ENCODE measurements at regions of chr1 and their contacts with region 1.

Region 1: DNA sequence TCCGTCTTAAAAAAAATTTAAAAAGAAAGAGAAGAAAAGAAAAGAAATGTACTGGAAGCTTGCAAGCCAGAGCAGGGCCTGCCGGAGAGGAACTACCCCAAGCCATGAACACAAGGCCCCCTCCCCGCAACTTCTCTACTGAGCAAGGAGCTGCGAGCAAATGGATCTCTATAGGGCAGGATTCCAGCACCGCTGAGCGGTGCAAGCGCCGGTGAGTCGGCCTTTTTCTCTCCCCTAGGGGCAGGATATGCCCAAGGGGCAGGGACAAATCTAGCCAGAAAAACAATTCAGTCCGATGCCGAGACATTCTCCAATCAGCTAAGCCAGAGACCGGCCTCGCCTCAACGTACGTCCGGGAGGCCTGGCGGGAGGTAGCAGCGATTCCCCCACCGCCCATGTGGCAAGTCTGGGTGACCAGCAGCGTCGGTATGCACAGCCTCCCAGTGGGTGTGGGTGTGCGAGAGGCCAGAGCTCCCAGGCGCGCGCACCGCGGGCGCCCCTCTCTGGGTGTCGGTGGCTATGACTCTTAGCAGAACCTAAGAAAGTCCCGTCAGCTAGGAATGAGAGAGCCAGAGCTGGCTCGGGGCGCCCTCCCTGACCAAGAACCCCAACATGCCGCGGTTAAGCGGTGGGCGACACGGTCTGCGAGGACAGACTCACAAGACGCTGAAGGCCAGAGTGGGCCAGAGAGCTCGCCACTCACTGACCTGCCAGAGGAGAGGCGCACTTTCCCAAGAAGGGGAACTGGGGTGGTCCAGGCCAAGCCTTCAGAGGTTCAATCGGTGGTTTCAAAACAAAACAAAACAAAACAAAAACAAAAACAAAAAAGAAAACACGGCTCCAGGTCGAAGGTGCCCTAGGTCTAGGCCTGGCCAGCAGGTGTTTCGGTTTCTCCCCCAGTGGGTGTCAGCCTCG is 1.9 kb downstream of the CSMD2 start:
- DNase-seq: peak; percentile 79
- CTCF ChIP-seq: peak; percentile 49

Region 2: GRCh38 chr1:34050701-34051485 is 112.2 kb before region 1 on chr1:
- CTCF ChIA-PET with region 1: no interaction called
- POLR2A ChIA-PET with region 1: no interaction called
- DNase-seq: no peak
- CTCF ChIP-seq: no peak

Region 3: GRCh38 chr1:34075576-34075975 is 87.5 kb before region 1 on chr1:
- CTCF ChIA-PET with region 1: no interaction called
- POLR2A ChIA-PET with region 1: no interaction called
- DNase-seq: no peak
- CTCF ChIP-seq: no peak

Region 4: DNA sequence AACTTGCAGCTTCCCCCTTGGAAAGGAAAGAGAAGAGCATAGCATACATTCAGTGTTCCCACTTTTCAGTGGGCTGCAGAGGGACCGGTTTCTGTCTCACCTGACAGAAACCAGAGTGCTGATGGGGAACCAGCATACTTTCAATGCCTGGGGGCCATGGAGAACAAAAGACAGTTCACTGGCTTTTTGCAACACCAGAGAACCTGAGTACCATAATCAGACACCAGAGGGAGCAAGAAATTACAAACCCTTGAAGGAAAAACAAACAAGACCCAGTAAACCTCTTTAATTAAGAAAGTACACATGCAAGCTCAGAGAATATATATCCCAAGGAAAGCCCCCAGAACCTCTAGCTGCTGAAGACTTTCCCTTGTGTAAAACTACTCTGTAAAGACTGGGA is 49.2 kb before region 1 on chr1:
- CTCF ChIA-PET with region 1: interaction called, 29 read pairs
- POLR2A ChIA-PET with region 1: no interaction called
- DNase-seq: no peak
- CTCF ChIP-seq: peak; percentile 31

Region 5: GRCh38 chr1:34176830-34177603 is 13.9 kb after region 1 on chr1 and contains the start of gene C1orf94:
- CTCF ChIA-PET with region 1: interaction called, 11 read pairs
- POLR2A ChIA-PET with region 1: no interaction called
- DNase-seq: no peak
- CTCF ChIP-seq: no peak

Region 6: DNA sequence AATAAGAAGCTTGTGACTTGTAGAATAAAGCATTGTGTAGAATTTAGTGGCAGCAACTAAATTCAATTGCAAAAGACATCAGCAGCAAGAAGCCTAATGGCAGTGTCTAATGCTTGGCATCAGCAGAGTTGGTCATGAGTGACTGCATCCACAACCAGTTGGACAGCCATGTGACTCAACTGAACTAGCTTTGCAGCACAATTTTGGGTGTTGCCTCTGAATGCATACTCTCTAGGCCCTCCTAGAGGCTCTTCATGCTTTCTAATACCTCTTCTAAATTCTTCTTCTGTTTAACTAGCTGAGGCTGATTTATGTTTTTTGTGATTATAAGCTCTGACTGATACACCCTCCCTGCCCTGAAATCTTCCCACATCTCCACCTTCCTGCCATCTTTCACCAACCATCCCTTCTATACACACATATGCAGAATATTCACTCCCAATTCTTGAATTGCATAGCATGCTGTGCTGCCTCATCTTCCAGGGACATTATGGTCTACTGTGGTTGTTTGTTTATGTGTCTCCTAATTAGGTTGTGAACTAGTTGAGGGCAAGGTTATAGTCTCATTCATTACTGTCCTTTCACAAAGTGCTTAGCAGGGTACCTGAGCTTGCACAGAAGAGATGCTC is 325.1 kb after region 1 on chr1:
- CTCF ChIA-PET with region 1: no interaction called
- POLR2A ChIA-PET with region 1: no interaction called
- DNase-seq: no peak
- CTCF ChIP-seq: no peak